Common myeloid progenitor, CD34-positive (primary cell): ENCODE measurements at regions of chr13 and their contacts with region 1.

Region 1: DNA sequence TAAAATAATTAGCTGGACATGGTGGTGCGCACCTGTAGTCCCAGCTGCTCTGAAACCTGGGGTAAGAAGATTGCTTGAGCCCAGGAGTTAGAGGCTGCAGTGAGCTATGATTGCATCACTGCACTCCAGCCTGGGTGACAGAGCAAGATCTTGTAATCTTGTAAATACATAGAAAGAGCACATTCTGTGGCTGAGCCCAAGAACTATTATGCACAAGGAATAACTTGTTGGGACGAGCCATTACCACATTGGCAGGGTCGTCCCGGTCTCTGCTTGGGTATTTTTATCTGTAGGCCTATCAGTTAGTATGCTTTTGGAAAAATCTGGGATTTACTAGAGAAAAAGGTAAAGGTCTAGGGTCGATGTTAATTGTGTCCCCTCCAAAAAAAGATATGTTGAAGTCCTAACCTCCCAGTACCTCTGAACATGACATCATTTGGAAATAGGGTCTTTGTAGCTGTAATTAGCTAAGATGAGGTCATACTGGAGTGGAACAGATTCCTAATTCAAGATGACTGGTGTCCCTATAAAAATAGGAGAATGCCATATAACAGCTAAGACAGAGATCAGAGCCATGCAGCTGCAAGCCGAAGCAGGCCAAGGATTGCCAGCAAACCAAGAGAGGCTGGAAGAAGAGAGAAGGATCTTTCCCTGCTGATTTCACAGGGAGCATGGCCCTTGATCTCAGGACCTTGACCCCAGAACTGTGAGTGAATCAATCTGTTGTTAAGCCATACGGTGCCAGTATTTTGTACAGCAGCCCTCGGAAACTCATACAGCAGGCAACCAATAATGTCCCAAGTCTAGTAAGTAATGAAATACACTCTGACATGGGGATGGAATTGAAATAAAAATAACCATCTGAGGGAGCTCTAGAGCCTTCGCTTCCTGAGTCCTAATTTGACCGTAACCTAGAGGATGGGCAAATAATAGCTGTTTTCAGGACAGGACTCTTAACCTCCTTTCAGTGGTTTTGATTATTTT is 77.0 kb downstream of the TM9SF2 start:
- DNase-seq: peak in 2 of 3 donors; percentile 28 to 37
- H3K4me3 ChIP-seq: no peak overlapping the region
- H3K27ac ChIP-seq: no peak overlapping the region
- H3K4me1 ChIP-seq: no peaks in the 10 kb centered on the region
- H3K27me3 ChIP-seq: no peaks in the 10 kb centered on the region

Region 2: DNA sequence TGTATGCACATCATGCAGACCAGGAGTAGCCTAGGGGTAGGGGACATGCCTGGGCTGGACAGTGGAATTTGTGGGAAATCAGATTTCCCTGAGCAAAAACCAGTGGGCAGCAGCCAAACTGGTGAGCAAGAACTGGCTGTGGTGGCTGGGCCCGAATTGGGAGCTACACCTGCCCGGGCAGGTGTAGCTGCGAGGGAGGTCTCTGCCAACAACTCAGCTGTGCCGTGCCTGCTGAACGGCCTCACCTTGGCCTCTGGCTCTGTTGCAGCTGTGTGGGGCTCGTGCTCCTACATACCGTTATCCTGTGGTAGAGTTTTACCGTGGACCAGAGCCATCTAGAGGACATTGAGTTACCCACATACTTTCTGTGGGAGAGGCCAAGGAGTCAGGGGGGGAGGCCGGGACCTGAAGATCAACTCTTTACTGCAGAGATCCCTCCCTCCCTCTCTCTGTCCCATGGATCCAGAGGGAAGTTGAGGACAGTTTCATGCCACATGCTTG is 36.2 kb after region 1 on chr13:
- CTCF ChIA-PET with region 1: interaction called, 15 read pairs
- POLR2A ChIA-PET with region 1: no interaction called
- DNase-seq: peak; percentile 63 to 70 (median 70)
- H3K4me3 ChIP-seq: peak overlapping the region in 1 of 7 experiments; percentile 24
- H3K27ac ChIP-seq: no peak overlapping the region
- H3K4me1 ChIP-seq: peaks cover 0 to 8% (median 5%) of the 10 kb centered on the region in 4 experiments
- H3K27me3 ChIP-seq: no peaks in the 10 kb centered on the region